ENCODE measurements at regions of chr18 and their contacts with region 1.

Region 1: GRCh38 chr18:37778417-37779165 is 213.0 kb upstream of the CELF4 start:
- DNase-seq: peak; percentile 78
- H3K4me3 ChIP-seq: peak overlapping the region in 1 of 2 experiments; percentile 50; a peak in 1 of 4 replicates
- H3K27ac ChIP-seq: no peak overlapping the region
- H3K4me1 ChIP-seq: no peaks in the 10 kb centered on the region; a peak in 1 of 4 replicates
- H3K27me3 ChIP-seq: no peaks in the 10 kb centered on the region
- CTCF ChIP-seq: peak; percentile 50
- EP300 ChIP-seq: no peak
- RAD21 ChIP-seq: peak; percentile 82

Region 2: DNA sequence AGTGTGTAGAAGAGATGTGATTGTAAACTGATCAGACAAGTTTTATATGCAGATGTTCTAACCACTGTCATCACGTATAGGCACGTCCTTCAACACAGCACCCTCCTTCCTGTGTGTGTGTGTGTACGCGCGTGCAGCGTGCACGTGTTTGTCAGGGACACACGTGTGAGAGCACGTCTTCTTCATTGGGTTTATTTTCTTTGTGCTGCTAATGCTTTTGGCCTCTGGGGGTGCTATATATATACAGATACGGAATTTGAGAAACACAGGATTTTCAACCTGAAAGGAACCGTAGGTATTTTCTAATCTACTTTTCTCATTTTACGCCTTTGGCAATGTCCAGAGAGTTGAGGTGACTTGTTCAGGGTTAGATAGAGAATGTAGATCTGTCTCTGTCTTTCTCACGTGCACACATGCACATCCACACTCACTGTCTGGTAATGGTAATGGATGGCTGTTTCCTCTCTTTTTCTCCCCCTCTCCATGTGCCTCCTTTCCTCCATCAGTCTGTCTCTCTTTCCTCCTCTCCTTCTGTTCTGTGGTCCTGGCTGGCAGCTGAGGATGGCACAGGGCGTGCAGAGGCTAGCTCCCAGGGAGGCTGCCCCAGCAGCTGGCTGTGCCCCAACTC is 199.6 kb before region 1 on chr18:
- CTCF ChIA-PET with region 1: interaction called, 11 read pairs
- POLR2A ChIA-PET with region 1: no interaction called
- DNase-seq: peak; percentile 72
- H3K4me3 ChIP-seq: no peak overlapping the region
- H3K27ac ChIP-seq: no peak overlapping the region
- H3K4me1 ChIP-seq: peaks cover 0 to 21% of the 10 kb centered on the region in 2 experiments; a peak in 1 of 4 replicates
- H3K27me3 ChIP-seq: no peaks in the 10 kb centered on the region
- CTCF ChIP-seq: peak; percentile 54
- EP300 ChIP-seq: no peak
- RAD21 ChIP-seq: peak; percentile 60

Region 3: DNA sequence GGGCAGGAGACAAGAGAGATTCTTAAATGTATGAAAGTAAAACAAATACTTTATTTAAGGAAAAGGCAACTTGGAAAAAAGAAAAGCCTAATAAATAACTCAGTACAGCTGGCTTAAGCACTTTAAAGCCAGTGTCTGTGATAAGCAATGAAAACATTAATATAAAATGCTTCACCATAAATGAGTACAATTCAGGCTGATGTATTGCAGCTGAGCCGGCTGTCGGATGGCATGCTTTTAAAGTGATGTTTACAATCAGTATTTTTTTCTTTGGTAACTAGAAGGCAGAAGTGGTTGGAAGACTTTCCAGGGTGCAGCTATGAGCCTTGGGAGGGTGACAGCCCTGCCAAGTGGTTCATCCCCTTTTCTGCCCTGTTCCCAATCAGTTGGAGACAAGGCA is 154.3 kb before region 1 on chr18:
- CTCF ChIA-PET with region 1: no interaction called
- POLR2A ChIA-PET with region 1: no interaction called
- DNase-seq: no peak
- H3K4me3 ChIP-seq: no peak overlapping the region
- H3K27ac ChIP-seq: no peak overlapping the region
- H3K4me1 ChIP-seq: no peaks in the 10 kb centered on the region; a peak in 1 of 4 replicates
- H3K27me3 ChIP-seq: no peaks in the 10 kb centered on the region
- CTCF ChIP-seq: no peak
- EP300 ChIP-seq: no peak
- RAD21 ChIP-seq: no peak

Region 4: DNA sequence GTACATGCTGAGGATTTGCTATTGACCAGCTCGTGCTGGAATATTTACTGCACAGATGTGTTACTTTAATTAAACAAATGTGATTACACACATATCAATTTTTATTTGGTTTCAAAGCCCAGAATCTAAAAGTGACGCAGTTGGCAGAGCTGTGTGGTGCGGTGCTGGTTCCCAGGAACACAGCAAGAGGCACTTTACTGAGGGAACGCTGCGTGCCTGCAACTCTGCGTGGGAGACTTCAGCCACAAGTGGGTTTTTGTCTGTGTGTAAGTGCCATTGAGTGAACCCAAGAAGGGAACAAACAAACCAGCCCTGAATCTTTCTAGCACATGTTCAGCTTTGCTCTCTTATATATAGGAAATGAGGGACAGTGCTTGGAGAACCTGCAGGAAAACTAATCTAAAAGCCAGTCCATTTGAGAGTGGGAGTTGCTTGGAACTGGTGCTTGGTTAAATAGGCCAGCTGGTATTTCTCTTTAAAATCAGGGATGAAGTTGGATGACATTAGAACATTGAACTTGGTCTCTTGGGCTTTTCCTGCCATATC is 16.4 kb before region 1 on chr18:
- CTCF ChIA-PET with region 1: interaction called, 30 read pairs
- POLR2A ChIA-PET with region 1: no interaction called
- DNase-seq: no peak
- H3K4me3 ChIP-seq: no peak overlapping the region
- H3K27ac ChIP-seq: no peak overlapping the region
- H3K4me1 ChIP-seq: peaks cover 0 to 9% of the 10 kb centered on the region in 2 experiments; a peak in 1 of 4 replicates
- H3K27me3 ChIP-seq: no peaks in the 10 kb centered on the region
- CTCF ChIP-seq: no peak
- EP300 ChIP-seq: no peak
- RAD21 ChIP-seq: no peak

Region 5: DNA sequence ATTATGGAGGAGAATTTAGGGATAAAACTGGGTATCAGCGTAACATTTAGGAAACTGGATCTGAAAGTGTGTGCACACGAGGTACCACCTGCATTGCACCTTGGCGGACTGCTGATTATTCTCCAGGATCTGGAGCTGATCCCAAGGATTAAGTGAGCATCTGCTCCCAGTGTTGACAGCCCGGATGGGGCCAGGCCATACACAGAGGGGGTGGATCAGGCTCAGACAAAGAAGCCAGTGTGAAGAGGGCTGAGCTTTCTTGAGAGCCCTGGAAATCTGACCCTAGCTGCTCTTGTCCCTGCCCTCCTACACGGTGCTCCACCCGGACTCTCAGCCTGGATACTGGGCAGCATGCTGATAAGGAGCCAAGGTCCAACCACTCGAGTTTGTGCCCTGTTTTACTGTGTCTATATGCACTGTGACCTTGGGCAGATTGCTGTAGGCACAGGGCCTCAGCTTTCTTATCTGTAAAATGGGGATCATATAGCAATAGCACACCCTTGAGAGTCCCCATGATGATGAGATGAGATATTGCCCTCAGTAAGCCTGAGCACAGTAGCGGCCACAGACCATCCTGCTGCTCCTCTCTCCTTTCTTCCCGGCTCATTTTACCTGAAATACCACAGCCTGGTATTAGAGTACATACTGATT is 183.8 kb after region 1 on chr18:
- CTCF ChIA-PET with region 1: no interaction called
- POLR2A ChIA-PET with region 1: no interaction called
- DNase-seq: no peak
- H3K4me3 ChIP-seq: no peak overlapping the region
- H3K27ac ChIP-seq: no peak overlapping the region
- H3K4me1 ChIP-seq: no peaks in the 10 kb centered on the region
- H3K27me3 ChIP-seq: no peaks in the 10 kb centered on the region
- CTCF ChIP-seq: no peak
- EP300 ChIP-seq: no peak
- RAD21 ChIP-seq: no peak

Region 6: GRCh38 chr18:38019292-38019691 is 240.7 kb after region 1 on chr18:
- CTCF ChIA-PET with region 1: no interaction called
- POLR2A ChIA-PET with region 1: no interaction called
- DNase-seq: no peak
- H3K4me3 ChIP-seq: no peak overlapping the region
- H3K27ac ChIP-seq: no peak overlapping the region
- H3K4me1 ChIP-seq: no peaks in the 10 kb centered on the region; a peak in 1 of 4 replicates
- H3K27me3 ChIP-seq: no peaks in the 10 kb centered on the region
- CTCF ChIP-seq: no peak
- EP300 ChIP-seq: no peak
- RAD21 ChIP-seq: no peak

Measured in SK-N-SH (cell line).